Aorta (tissue), 5 donors: ENCODE measurements at regions of chr2 and their contacts with region 1.

Region 1: GRCh38 chr2:234544659-234545611 is 48.1 kb upstream of the ARL4C start:
- DNase-seq: peak; percentile 75 to 82
- ATAC-seq: peak; percentile 68
- H3K4me3 ChIP-seq: no peak overlapping the region
- H3K27ac ChIP-seq: no peak overlapping the region
- H3K4me1 ChIP-seq: no peaks in the 10 kb centered on the region
- H3K27me3 ChIP-seq: no peaks in the 10 kb centered on the region

Region 2: GRCh38 chr2:234003972-234004617 is 540.8 kb before region 1 on chr2:
- intact Hi-C with region 1: no loop called
- DNase-seq: peak; percentile 76 to 78
- ATAC-seq: no peak
- H3K4me3 ChIP-seq: no peak overlapping the region
- H3K27ac ChIP-seq: no peak overlapping the region
- H3K4me1 ChIP-seq: no peaks in the 10 kb centered on the region
- H3K27me3 ChIP-seq: no peaks in the 10 kb centered on the region

Region 3: DNA sequence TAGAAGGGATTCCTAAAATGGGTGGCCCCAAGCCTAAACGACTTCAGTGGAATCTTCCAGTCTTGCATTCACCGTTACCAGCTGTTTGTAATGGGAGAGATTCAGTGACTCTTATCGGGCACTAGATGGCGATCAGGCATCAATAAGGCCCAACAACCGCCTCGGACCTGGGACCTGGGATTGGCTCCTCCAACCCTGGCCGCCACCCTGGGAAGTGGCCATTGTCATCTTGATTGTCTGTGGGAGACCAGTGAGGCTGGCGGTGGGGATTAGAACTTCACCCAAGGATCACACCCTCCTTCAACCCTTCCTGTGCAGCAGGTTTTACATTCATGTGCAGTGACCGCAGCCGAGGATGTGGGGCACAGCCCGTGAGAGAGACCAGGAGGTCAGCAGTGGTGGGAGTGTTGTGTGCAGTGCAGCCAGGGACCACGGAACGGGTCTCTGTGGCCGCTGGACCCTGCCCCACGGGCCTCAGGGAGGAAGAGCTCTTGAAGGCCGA is 409.2 kb before region 1 on chr2:
- intact Hi-C with region 1: loop called in 1 of 2 experiments (anchors 5 kb)
- DNase-seq: peak; percentile 70 to 74
- ATAC-seq: peak; percentile 37
- H3K4me3 ChIP-seq: no peak overlapping the region
- H3K27ac ChIP-seq: no peak overlapping the region
- H3K4me1 ChIP-seq: no peaks in the 10 kb centered on the region
- H3K27me3 ChIP-seq: no peaks in the 10 kb centered on the region